ENCODE measurements at regions of chr9 and their contacts with region 1.

Region 1: DNA sequence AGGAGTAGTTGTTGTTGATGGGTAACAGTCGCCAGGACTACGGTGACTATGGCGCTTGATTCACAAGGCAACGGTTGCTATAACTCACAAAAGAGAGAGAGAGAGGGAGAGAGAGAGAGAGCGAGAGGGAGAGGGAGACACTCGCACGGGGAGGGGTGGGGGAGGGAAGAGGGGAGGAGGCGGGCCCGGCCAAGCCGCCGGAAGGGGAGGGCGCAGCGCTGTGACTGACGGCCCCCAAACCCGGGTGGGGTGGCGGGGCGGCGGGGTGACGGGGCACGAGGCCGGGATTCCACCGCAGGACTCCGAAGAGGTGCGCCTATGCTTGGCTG is at the start of gene RFX3:
- DNase-seq: peak; percentile 92
- ATAC-seq: peak; percentile 61
- H3K4me3 Mint-ChIP-seq: peak within 1 kb of the TSS; percentile 96
- H3K27ac Mint-ChIP-seq: peak within 1 kb of the TSS; percentile 100
- H3K4me1 Mint-ChIP-seq: peaks cover 50% of the 10 kb centered on the region
- H3K27me3 Mint-ChIP-seq: no peaks in the 10 kb centered on the region
- total RNA-seq, gene RFX3: 6.8 to 9.0 TPM

Region 2: GRCh38 chr9:2838371-2839000 is 687.3 kb before region 1 on chr9:
- CTCF ChIA-PET with region 1: no interaction called
- POLR2A ChIA-PET with region 1: interaction called, 14 read pairs
- DNase-seq: no peak
- ATAC-seq: no peak
- H3K4me3 Mint-ChIP-seq: no peak overlapping the region
- H3K27ac Mint-ChIP-seq: no peak overlapping the region
- H3K4me1 Mint-ChIP-seq: peaks cover 20% of the 10 kb centered on the region
- H3K27me3 Mint-ChIP-seq: no peaks in the 10 kb centered on the region

Region 3: DNA sequence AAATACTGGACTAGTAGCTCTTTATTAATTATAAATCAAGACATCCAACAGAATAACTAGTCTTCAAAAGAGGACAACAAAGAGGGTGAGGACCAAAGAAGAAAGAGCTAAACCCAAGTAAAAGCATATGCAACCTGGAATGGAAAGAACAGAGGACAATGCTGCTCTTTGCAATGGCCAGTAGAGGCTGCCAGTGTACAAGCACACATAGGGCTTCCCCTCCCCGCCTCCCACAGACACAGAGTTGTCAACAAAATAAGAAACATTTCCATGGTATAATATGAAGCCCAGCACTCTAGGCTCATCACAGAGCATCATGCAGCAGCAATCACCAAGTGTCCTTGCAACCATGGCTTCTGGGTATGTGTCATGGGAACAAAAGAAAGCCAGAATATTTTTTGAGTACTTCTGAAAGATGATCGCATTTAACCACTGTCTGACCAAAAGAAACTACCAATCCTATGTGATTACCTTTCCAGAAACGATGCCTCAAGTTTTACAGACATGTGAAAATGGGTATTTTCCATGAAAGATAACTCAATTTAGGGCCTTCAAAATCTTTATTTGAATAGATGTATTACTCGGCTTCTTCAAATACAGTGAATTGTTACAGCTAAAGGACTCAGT is 58.1 kb before region 1 on chr9:
- CTCF ChIA-PET with region 1: interaction called, 22 read pairs
- POLR2A ChIA-PET with region 1: interaction called, 25 read pairs
- DNase-seq: peak; percentile 72
- ATAC-seq: peak; percentile 99
- H3K4me3 Mint-ChIP-seq: no peak overlapping the region
- H3K27ac Mint-ChIP-seq: no peak overlapping the region
- H3K4me1 Mint-ChIP-seq: peaks cover 4% of the 10 kb centered on the region
- H3K27me3 Mint-ChIP-seq: no peaks in the 10 kb centered on the region

Region 4: DNA sequence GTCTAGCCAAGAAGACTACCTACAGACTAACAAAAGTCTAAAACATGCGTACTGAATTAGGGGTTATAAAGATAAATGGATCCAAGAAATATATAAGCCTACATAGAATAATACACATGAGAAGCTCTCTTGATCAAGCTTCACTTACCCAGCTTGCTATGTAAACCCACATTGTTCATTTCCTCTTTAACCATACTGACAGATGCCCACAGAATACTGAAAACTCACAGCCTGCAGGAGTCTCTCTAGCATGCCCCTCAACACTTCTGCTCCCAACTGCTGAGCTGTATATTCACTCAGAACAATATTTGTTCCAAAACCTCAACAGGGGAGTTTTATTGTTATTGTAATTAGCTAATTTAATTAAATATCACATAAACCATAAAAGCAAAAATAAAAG is 52.4 kb before region 1 on chr9:
- CTCF ChIA-PET with region 1: interaction called, 18 read pairs
- POLR2A ChIA-PET with region 1: interaction called, 63 read pairs
- DNase-seq: no peak
- ATAC-seq: peak; percentile 70
- H3K4me3 Mint-ChIP-seq: no peak overlapping the region
- H3K27ac Mint-ChIP-seq: peak overlapping the region; percentile 8
- H3K4me1 Mint-ChIP-seq: peaks cover 48% of the 10 kb centered on the region
- H3K27me3 Mint-ChIP-seq: no peaks in the 10 kb centered on the region

Region 5: DNA sequence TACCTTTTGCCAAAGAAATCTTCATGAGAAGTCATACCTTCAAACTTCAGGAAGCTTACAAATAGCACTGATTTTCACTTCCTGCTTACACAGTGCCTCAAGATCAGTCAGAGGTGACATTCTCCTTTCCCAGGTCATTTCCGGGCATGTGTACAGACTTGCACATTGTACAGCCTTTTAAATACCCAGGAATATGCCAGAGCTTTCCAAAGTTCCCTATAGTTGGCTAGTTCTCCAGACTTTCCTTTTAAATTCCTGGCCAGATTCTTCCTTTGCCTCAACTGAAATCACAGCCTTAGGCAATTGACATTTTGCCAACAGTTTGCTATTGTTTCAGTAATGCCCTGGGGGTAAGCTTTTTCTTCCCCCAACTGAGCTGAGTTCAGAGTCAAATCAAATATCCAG is 47.2 kb before region 1 on chr9:
- CTCF ChIA-PET with region 1: interaction called, 18 read pairs
- POLR2A ChIA-PET with region 1: interaction called, 63 read pairs
- DNase-seq: no peak
- ATAC-seq: no peak
- H3K4me3 Mint-ChIP-seq: no peak overlapping the region
- H3K27ac Mint-ChIP-seq: peak overlapping the region; percentile 66
- H3K4me1 Mint-ChIP-seq: peaks cover 66% of the 10 kb centered on the region
- H3K27me3 Mint-ChIP-seq: no peaks in the 10 kb centered on the region

Region 6: GRCh38 chr9:3508521-3509291 is 17.1 kb before region 1 on chr9:
- CTCF ChIA-PET with region 1: no interaction called
- POLR2A ChIA-PET with region 1: interaction called, 18 read pairs
- DNase-seq: no peak
- ATAC-seq: no peak
- H3K4me3 Mint-ChIP-seq: no peak overlapping the region
- H3K27ac Mint-ChIP-seq: no peak overlapping the region
- H3K4me1 Mint-ChIP-seq: peaks cover 23% of the 10 kb centered on the region
- H3K27me3 Mint-ChIP-seq: no peaks in the 10 kb centered on the region